ENCODE measurements at regions of chr11 and their contacts with region 1.

Region 1: DNA sequence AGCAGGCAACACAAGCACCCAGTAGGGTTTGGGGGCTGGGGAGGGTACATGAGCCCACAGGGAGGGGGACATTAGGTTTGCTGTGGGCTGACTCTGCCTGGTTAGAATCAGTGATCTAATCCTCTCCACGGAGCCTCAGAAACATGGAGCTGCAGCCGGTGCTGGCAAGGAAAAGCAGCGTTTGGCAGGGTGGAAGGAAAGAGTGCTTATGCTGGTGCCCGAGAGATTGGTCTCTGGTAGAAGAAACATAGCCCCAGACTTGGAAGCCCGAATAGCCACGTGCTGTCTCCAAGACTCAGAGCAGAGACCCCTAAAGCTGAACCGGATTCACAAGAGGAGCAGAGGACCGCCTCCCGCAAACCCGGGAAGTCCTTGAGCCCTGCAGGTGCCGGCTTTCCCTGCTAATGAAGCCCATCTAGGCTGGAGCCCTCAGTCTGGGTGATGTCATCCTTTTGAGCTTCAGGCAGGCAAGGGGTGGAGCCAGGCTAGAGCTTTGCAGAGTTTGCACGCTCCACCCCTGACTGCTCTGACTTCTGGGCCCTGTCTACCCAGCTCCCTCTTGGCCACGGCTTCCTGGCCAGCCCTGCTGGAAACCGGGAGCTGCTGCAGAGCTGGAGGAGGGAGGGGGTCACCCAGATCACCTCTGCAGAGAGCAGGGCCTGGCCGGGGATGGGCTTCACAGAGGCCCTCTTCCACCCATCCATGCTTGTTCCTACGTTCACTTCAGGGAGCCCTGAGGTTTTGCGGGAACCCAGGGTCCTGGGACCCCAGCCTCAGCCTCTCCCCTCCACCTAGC is 35.0 kb upstream of the JAM3 start:
- DNase-seq: peak; percentile 92

Region 2: GRCh38 chr11:133947321-133947756 is 86.6 kb before region 1 on chr11:
- intact Hi-C with region 1: loop called (anchors 2 kb)
- DNase-seq: no peak

Region 3: GRCh38 chr11:133955081-133955891 is 78.6 kb before region 1 on chr11:
- intact Hi-C with region 1: loop called (anchors 2 kb)
- DNase-seq: peak; percentile 87

Region 4: DNA sequence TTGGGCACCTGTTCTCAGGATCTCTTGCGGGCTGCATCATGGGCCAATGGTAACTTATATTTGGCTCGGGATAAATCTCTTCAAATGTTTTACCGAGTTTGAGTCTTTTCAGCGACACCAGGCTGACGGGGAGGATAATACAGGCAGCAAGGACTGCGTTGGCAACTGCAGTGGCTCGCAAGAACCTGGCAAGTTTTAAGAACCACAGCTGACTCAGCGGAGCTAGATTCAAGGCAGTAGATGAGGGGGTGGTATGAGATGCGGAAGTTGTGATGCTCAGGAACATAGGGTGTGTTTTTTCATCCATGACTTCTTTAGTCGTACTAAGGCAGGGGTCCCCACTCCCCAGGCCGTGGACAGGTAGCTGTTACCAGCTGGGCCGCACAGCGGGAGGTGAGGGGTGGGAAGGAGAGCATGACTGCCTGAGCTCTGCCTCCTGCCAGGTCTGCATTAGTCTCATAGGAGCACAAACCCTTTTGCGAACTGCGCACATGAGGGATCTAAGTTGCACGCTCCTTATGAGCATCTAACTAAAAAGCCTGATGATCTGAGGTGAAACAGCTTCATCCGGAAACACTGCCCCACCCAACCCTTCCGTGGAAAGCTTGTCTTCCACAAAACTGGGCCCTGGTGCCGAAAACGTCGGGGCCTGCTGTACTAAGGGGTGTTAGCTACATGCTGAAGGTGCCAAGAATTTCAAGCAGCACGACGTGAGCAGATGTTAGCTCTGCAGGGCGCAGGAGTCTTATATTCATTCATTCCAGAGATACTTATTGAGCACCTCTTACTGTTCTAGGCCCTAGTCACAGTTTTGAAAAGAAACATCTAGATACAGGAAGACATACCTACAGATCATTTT is 28.6 kb after region 1 on chr11:
- intact Hi-C with region 1: no loop called
- DNase-seq: no peak

Measured in cardiac septum (tissue), 1 donor.